Activated naive CD4-positive, alpha-beta T cell treated with anti-CD3 and anti-CD28 coated beads for 36 hours (primary cell): ENCODE measurements at regions of chr2 and their contacts with region 1.

Region 1: GRCh38 chr2:176291809-176292283 is 22.6 kb downstream of the MTX2 start:
- DNase-seq: no peak
- H3K4me3 Mint-ChIP-seq: no peak overlapping the region
- H3K27ac Mint-ChIP-seq: no peak overlapping the region
- H3K4me1 Mint-ChIP-seq: peaks cover 32% of the 10 kb centered on the region
- H3K27me3 Mint-ChIP-seq: no peaks in the 10 kb centered on the region

Region 2: GRCh38 chr2:176027806-176028205 is 264.0 kb before region 1 on chr2:
- CTCF ChIA-PET with region 1: no interaction called
- intact Hi-C with region 1: no loop called
- DNase-seq: no peak
- H3K4me3 Mint-ChIP-seq: no peak overlapping the region
- H3K27ac Mint-ChIP-seq: no peak overlapping the region
- H3K4me1 Mint-ChIP-seq: no peaks in the 10 kb centered on the region
- H3K27me3 Mint-ChIP-seq: peaks cover 19% of the 10 kb centered on the region

Region 3: DNA sequence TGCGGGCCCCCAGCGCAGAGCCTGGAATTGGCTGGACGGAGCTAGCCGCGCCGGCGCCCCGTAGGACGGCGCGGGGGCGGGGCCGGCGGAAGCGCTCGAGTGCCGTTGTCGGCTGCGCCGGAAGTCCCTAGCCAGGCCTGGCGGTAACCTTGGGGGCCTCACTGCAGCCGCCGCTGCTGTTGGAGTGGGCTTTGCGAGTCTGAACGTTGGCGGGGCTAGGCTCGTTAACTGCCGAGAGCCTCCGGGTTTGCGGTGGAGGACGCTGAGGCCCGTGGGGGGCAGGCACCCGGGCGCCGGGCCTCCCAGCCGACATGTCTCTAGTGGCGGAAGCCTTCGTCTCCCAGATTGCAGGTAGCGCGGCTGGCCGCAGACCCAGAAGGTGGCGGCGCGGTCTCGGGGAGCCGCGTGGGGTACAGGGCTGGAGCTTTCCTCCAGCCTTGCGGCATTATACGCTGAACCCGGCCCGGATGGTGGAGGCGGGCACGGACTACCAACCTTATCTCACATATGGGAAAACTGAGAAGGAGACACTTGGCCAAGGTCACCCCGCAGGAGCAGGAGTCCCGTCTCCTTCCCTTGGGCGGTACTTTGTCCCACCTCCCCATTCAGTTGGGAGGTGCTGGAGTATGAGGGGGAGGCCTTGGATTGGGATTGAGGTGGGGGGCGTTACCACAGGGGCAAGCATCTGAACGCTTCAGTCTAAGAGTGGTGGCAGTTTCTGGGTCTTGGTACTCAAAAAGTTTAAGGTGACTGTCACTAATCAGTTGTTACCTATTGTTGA is 22.3 kb before region 1 on chr2 and contains the start of gene MTX2:
- CTCF ChIA-PET with region 1: no interaction called
- intact Hi-C with region 1: loop called (anchors 1 kb)
- DNase-seq: peak; percentile 76
- H3K4me3 Mint-ChIP-seq: peak within 1 kb of the TSS; percentile 97
- H3K27ac Mint-ChIP-seq: peak within 1 kb of the TSS; percentile 88
- H3K4me1 Mint-ChIP-seq: peaks cover 20% of the 10 kb centered on the region
- H3K27me3 Mint-ChIP-seq: no peaks in the 10 kb centered on the region
- total RNA-seq, gene MTX2: 24.3 to 28.1 TPM

Region 4: DNA sequence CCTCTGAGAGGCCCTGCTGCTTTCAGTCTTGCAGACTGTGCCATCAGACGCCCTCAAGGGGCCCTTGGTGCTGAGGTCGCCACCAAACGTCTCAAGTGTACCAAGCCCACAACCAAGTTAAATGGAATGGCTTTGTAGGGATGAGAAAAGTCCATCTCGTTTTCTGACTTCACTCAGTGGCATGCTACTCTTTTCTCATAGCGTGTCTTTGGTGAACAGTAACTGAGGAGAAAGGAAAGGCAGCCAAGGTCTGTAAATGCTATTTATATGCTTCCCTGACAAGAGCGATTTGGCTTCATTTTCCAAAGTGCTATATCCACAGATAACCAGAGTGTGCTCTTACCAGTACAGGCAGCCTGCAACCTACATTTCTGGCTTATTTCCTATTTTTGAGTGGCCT is 100.4 kb after region 1 on chr2:
- CTCF ChIA-PET with region 1: no interaction called
- intact Hi-C with region 1: no loop called
- DNase-seq: no peak
- H3K4me3 Mint-ChIP-seq: no peak overlapping the region
- H3K27ac Mint-ChIP-seq: no peak overlapping the region
- H3K4me1 Mint-ChIP-seq: no peaks in the 10 kb centered on the region
- H3K27me3 Mint-ChIP-seq: peaks cover 29% of the 10 kb centered on the region